ENCODE measurements at regions of chr7 and their contacts with region 1.

Region 1: GRCh38 chr7:66740302-66740979 is at the start of gene RABGEF1:
- DNase-seq: peak; percentile 98
- ATAC-seq: peak; percentile 89
- H3K4me3 Mint-ChIP-seq: peak within 1 kb of the TSS; percentile 98
- H3K27ac Mint-ChIP-seq: peak within 1 kb of the TSS; percentile 91
- H3K4me1 Mint-ChIP-seq: peaks cover 34% of the 10 kb centered on the region
- H3K27me3 Mint-ChIP-seq: no peaks in the 10 kb centered on the region
- total RNA-seq, gene RABGEF1: 19.3 to 22.5 TPM

Region 2: GRCh38 chr7:66591799-66592596 is 148.4 kb before region 1 on chr7:
- CTCF ChIA-PET with region 1: no interaction called
- POLR2A ChIA-PET with region 1: no interaction called
- intact Hi-C with region 1: loop called (anchors 1 kb)
- DNase-seq: peak; percentile 96
- ATAC-seq: peak; percentile 98
- H3K4me3 Mint-ChIP-seq: peak overlapping the region; percentile 94
- H3K27ac Mint-ChIP-seq: peak overlapping the region; percentile 98
- H3K4me1 Mint-ChIP-seq: peaks cover 46% of the 10 kb centered on the region
- H3K27me3 Mint-ChIP-seq: no peaks in the 10 kb centered on the region

Region 3: DNA sequence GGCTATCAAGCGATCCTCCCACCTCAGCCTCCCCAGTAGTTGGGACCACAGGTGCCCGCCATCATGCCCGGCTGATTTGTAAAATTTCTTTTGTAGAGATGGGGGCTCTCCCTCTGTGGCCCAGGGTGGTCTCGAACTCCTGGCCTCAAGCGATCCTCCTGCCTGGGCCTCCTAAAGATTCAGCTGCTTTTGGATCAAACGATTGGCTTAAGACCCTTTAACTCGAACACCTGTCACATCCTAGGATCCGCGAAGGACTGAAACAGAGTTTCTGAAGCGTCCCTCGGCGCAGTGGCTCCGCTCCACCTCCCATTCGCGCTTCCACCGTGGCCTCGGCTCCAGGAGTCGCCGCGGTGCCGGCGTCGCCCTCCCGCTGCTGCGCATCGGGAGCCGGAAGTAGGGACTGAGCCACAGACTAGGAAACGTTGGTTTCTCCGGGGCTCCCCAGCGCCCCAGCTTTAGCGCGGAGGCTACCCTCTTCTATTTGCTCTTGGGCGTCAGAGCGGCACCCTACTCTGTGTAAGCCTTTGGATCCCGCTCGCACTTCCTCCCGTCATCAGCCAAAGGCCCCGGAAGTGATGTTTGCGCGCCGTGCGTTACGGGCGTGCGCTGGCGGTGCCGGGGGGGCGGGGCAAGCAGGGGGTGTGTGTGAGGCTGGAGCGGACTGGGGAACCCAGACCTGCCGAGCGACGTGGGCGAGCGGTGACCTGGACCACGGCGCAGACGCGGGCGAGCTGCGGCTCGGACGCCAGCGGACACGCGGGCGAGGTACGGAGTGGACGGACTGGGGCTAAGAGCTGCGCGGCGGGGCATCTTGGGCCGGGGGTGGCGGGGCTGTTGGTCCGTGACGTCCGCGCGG is 58.7 kb before region 1 on chr7:
- CTCF ChIA-PET with region 1: interaction called, 3 read pairs
- POLR2A ChIA-PET with region 1: interaction called, 5 read pairs
- intact Hi-C with region 1: loop called (anchors 1 to 2 kb)
- DNase-seq: peak; percentile 98
- ATAC-seq: peak; percentile 95
- H3K4me3 Mint-ChIP-seq: peak overlapping the region; percentile 90
- H3K27ac Mint-ChIP-seq: peak overlapping the region; percentile 92
- H3K4me1 Mint-ChIP-seq: peaks cover 34% of the 10 kb centered on the region
- H3K27me3 Mint-ChIP-seq: no peaks in the 10 kb centered on the region

Region 4: DNA sequence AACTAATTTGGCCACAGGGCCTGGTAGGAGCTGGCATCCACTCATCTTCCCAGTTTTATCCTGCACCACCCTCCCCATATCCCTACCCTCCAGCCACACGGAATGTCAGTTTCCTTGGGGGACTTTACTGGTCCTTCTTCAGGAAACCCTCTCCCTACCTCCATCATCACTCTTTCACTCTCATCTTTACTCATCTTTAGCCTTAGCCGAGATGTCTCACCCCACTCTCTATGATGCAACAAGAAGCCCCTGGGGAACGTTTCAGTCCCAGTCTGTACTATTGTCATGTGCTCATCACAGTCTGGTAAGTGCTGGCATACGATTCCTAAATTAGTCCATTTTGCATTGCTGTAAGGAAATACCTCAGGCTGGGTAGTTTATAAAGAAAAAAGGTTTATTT is 145.7 kb after region 1 on chr7:
- CTCF ChIA-PET with region 1: no interaction called
- POLR2A ChIA-PET with region 1: no interaction called
- intact Hi-C with region 1: loop called in 1 of 2 experiments (anchors 10 kb)
- DNase-seq: peak; percentile 33
- ATAC-seq: peak; percentile 13
- H3K4me3 Mint-ChIP-seq: no peak overlapping the region
- H3K27ac Mint-ChIP-seq: peak overlapping the region; percentile 72
- H3K4me1 Mint-ChIP-seq: peaks cover 44% of the 10 kb centered on the region
- H3K27me3 Mint-ChIP-seq: no peaks in the 10 kb centered on the region

Measured in activated CD4-positive, alpha-beta T cell treated with anti-CD3 and anti-CD28 coated beads for 36 hours (primary cell).